AG04450 (cell line): ENCODE measurements at regions of chr3 and their contacts with region 1.

Region 1: DNA sequence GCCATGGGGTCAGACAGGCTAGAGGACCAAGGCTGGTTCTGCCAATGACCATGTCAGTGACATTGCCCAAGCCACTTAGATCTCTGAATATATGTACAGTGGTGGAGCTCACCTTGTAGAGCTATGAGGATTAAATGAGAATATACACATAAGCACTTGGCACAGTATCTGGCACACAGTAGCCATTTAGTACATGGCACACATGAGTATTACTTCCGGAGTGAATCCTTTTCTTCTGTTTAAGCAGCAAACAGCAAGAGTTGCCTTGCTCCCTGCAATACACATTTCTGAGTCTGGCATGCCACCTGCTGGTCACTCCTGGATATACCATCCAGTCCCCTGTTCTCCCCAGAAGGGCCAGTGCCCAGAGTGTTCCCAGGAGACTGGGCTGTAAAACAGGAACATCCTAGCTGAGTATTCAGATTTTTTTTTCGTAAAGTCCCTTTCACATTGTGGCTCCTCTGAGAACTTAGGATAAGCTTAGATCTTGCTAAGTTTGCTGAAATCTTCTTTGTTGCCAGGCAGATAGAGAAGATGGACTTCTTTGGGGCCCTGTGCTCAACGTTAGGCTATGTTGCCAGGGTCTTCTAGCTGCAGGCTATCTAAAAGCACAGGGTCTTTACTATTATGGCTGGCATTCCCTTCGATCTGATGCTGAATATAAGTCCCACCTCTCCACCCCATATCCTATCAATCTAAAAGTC is 203.4 kb downstream of the ADAMTS9 start:
- DNase-seq: peak; percentile 69
- H3K4me3 ChIP-seq: no peak overlapping the region
- H3K27ac ChIP-seq: no peak overlapping the region
- H3K27me3 ChIP-seq: no peaks in the 10 kb centered on the region
- CTCF ChIP-seq: peak; percentile 85

Region 2: GRCh38 chr3:64011685-64012084 is 472.8 kb before region 1 on chr3:
- CTCF ChIA-PET with region 1: interaction called, 12 read pairs
- POLR2A ChIA-PET with region 1: no interaction called
- DNase-seq: no peak
- H3K4me3 ChIP-seq: no peak overlapping the region
- H3K27ac ChIP-seq: no peak overlapping the region
- H3K27me3 ChIP-seq: no peaks in the 10 kb centered on the region
- CTCF ChIP-seq: no peak

Region 3: DNA sequence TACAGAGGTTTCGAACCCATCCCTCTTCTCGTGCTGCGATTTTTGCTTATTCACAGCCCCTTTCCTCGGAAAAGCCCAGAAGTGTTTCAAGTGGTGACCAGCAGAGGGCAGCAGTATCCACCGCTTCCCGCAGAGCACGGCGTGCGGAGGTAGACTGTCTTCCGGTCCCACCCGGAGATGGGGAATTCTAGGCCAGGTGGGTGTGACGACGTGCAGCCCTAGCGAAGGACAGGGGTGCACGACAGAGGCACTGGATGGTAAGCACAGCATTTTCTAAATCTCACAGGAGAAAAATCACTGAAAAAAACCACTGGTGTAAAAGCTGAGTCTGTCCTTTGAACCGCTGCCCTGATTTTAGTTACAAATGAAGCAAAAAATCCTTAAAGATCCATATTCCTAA is 453.7 kb before region 1 on chr3:
- CTCF ChIA-PET with region 1: interaction called, 74 read pairs
- POLR2A ChIA-PET with region 1: no interaction called
- DNase-seq: no peak
- H3K4me3 ChIP-seq: peak overlapping the region; percentile 42
- H3K27ac ChIP-seq: no peak overlapping the region
- H3K27me3 ChIP-seq: no peaks in the 10 kb centered on the region
- CTCF ChIP-seq: peak; percentile 88

Region 4: GRCh38 chr3:64121750-64122311 is 362.6 kb before region 1 on chr3:
- CTCF ChIA-PET with region 1: no interaction called
- POLR2A ChIA-PET with region 1: no interaction called
- DNase-seq: no peak
- H3K4me3 ChIP-seq: no peak overlapping the region
- H3K27ac ChIP-seq: no peak overlapping the region
- H3K27me3 ChIP-seq: no peaks in the 10 kb centered on the region
- CTCF ChIP-seq: no peak

Region 5: GRCh38 chr3:64267721-64268604 is 216.5 kb before region 1 on chr3:
- CTCF ChIA-PET with region 1: interaction called, 27 read pairs
- POLR2A ChIA-PET with region 1: interaction called, 4 read pairs
- DNase-seq: peak; percentile 36
- H3K4me3 ChIP-seq: peak overlapping the region; percentile 78
- H3K27ac ChIP-seq: peak overlapping the region; percentile 68
- H3K27me3 ChIP-seq: no peaks in the 10 kb centered on the region
- CTCF ChIP-seq: 0 out of 2 replicates have a peak, but pooled peaks have one; percentile 14

Region 6: DNA sequence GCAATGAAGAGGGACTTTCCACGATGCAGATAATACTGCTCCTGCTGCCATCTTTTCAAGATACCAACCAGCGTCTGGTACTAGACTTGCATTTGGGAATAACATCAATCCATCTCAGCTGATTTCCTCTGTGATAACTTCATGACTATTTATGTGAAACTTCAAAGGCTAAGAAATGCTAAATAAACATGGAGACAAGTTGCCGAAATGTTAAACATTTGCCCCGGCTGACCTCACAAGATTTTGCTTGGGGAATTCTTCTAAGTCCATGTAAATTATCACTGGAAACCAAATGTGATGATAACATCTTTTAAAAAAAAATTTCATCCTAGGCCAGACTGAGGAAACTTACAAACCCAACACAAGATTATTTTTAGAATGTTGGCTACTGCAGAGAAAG is 73.3 kb before region 1 on chr3:
- CTCF ChIA-PET with region 1: interaction called, 22 read pairs
- POLR2A ChIA-PET with region 1: no interaction called
- DNase-seq: no peak
- H3K4me3 ChIP-seq: no peak overlapping the region
- H3K27ac ChIP-seq: no peak overlapping the region
- H3K27me3 ChIP-seq: no peaks in the 10 kb centered on the region
- CTCF ChIP-seq: no peak